ENCODE measurements at regions of chr12 and their contacts with region 1.

Region 1: GRCh38 chr12:122225683-122226407 is at the start of gene DIABLO:
- DNase-seq: peak; percentile 99 to 100 (median 100)
- ATAC-seq: peak; percentile 94
- H3K4me3 ChIP-seq: peak within 1 kb of the TSS; percentile 94
- H3K4me3 Mint-ChIP-seq: peak within 1 kb of the TSS; percentile 95
- H3K27ac ChIP-seq: peak within 1 kb of the TSS; percentile 95 to 97
- H3K27ac Mint-ChIP-seq: peak within 1 kb of the TSS; percentile 95
- H3K4me1 ChIP-seq: peaks cover 37% of the 10 kb centered on the region
- H3K4me1 Mint-ChIP-seq: peaks cover 37% of the 10 kb centered on the region
- H3K27me3 ChIP-seq: no peaks in the 10 kb centered on the region
- H3K27me3 Mint-ChIP-seq: no peaks in the 10 kb centered on the region
- CTCF ChIP-seq: no peak
- total RNA-seq, gene DIABLO: 90.3 to 91.3 TPM

Region 2: GRCh38 chr12:122203301-122204166 is 22.3 kb before region 1 on chr12 and contains the start of gene B3GNT4:
- CTCF ChIA-PET with region 1: no interaction called
- POLR2A ChIA-PET with region 1: interaction called, 15 read pairs
- intact Hi-C with region 1: loop called in 1 of 2 experiments (anchors 2 kb)
- DNase-seq: peak; percentile 50 to 85 (median 70)
- ATAC-seq: peak; percentile 81
- H3K4me3 ChIP-seq: peak within 1 kb of the TSS; percentile 65
- H3K4me3 Mint-ChIP-seq: peak within 1 kb of the TSS; percentile 83
- H3K27ac ChIP-seq: no peak within 1 kb of the TSS
- H3K27ac Mint-ChIP-seq: peak within 1 kb of the TSS; percentile 3
- H3K4me1 ChIP-seq: peaks cover 14% of the 10 kb centered on the region
- H3K4me1 Mint-ChIP-seq: peaks cover 12% of the 10 kb centered on the region
- H3K27me3 ChIP-seq: peaks cover 7 to 12% of the 10 kb centered on the region in 2 experiments
- H3K27me3 Mint-ChIP-seq: no peaks in the 10 kb centered on the region
- CTCF ChIP-seq: no peak
- total RNA-seq, gene B3GNT4: not detected

Region 3: DNA sequence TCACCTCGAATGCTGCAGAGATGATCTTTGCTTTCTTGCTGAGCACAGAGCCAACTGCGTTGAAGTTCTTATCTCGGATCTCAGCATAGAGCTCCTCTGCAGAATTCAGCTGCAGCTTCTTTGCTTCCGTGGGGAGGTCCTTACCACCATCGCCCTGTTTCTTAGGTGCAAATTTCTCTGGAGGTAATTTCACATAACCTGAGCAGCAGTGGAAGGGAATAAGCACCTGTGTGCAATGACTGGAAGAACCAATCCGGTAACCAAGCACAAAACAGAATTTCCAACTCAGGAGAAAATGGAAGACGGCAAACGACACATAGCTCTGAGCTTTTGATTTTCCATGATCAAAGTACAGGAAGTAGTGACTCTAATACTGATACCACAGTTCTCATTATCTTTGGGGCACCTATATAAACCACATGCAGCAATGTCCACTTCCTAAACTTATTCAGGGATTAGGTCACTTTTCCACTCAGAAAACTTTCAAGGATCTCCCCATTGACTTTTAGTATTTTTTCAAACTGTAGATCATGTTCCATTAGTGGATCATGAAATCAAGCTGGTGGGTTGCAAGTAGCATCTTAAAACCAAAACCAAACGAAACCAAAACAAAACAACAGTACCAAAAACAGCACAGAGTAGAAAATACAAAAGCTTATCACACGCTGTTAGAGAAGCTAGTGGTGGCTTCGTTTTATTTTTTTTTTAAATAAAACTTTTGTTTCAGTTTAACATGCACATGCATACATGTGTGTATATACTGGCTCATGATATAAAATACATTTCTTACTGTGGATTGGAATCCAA is 18.9 kb after region 1 on chr12:
- CTCF ChIA-PET with region 1: no interaction called
- POLR2A ChIA-PET with region 1: interaction called, 123 read pairs
- intact Hi-C with region 1: loop called in 1 of 2 experiments (anchors 2 kb)
- DNase-seq: peak in 6 of 14 experiments; percentile 5 to 79 (median 42)
- ATAC-seq: peak; percentile 81
- H3K4me3 ChIP-seq: peak overlapping the region; percentile 54
- H3K4me3 Mint-ChIP-seq: peak overlapping the region; percentile 87
- H3K27ac ChIP-seq: peak overlapping the region; percentile 44 to 52
- H3K27ac Mint-ChIP-seq: peak overlapping the region; percentile 88
- H3K4me1 ChIP-seq: peaks cover 36% of the 10 kb centered on the region
- H3K4me1 Mint-ChIP-seq: peaks cover 31% of the 10 kb centered on the region
- H3K27me3 ChIP-seq: no peaks in the 10 kb centered on the region
- H3K27me3 Mint-ChIP-seq: no peaks in the 10 kb centered on the region
- CTCF ChIP-seq: no peak

Region 4: DNA sequence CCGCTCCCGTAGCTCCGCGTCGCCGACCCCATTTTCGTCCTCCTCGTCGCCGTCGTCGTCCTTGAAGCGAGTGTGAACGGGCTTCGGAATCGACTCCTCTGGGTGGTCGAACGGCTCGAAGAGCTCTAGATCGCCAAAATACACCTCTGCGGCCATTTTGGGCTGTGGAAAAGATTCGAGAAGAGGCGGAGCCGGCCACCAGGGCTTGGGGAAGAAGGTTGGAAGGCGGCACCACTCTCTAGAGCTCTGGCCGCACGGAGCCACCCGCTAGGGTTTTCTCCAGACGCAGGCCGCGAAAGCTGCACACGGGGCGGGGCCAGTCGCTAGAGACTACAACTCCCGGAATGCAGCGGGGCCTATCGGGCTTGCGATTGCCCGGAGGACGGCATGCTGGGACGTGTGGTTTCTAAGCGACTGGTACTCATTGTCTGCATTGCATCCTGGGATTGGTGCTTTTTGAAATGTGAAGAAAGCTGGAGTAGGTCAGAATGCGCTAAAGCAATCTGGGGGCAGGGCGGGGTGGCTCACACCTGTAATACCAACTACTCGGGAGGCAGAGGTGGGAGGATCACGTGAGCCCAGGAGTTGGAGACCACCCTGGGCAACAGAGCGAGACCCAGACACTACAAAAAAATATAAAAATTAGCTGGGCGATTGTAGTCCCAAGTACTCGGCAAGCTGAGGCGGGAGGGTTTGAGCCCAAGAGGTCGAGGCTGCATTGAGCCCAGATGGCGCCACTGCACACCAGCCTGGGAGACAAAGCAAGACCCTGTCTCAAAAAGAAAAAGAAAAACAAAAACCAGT is 275.0 kb after region 1 on chr12 and contains the start of gene ZCCHC8:
- CTCF ChIA-PET with region 1: no interaction called
- POLR2A ChIA-PET with region 1: interaction called, 12 read pairs
- intact Hi-C with region 1: no loop called
- DNase-seq: peak; percentile 91 to 99 (median 96)
- ATAC-seq: peak; percentile 92
- H3K4me3 ChIP-seq: peak within 1 kb of the TSS; percentile 80
- H3K4me3 Mint-ChIP-seq: peak within 1 kb of the TSS; percentile 96
- H3K27ac ChIP-seq: peak within 1 kb of the TSS; percentile 88 to 89
- H3K27ac Mint-ChIP-seq: peak within 1 kb of the TSS; percentile 97
- H3K4me1 ChIP-seq: peaks cover 43% of the 10 kb centered on the region
- H3K4me1 Mint-ChIP-seq: peaks cover 49% of the 10 kb centered on the region
- H3K27me3 ChIP-seq: no peaks in the 10 kb centered on the region
- H3K27me3 Mint-ChIP-seq: no peaks in the 10 kb centered on the region
- CTCF ChIP-seq: no peak
- total RNA-seq, gene ZCCHC8: 49.4 to 54.8 TPM

Region 5: DNA sequence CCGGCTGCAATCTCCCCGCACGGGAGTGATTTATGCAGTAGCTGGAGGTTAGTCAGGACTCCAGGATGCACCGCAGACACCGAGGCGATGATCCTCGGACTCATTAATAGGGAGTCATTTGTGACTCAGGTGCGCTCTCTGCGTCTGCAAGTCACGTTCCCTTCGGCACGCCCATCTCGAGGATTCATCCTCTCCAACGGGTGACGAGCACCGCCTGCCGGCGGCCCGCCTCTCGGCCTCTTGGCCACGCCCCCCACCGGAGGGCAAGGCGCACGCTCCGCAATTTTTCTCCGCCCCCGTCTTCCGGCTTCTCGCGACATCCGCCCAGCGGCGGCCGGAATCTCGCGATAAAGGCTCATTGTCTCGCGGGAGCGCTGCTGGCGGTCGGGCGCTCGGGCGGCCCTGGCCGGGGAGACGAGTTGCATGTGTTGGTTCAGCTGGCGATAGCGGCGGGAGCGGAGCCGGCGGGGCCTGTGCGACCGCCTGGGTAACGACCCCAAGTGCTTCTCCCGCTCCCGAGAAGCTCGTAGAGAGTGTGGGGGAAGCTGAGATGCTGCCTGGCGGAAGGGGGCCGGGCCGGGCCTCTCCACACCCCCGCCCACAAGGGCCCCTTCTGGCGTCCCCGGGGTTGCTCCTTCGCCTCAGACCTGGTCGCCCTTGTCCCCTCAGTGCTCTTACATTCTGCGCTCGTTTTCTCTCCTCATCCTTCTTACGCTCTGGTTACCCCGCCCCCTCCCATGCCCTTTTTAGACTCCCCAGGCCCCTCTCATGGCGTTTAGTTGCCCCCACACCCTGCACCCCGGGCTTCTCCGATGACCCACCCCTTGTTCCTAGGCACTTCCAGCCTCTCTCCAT is 526.8 kb after region 1 on chr12 and contains the start of gene DENR:
- CTCF ChIA-PET with region 1: no interaction called
- POLR2A ChIA-PET with region 1: no interaction called
- intact Hi-C with region 1: loop called in 1 of 2 experiments (anchors 5 kb)
- DNase-seq: peak; percentile 99 to 100 (median 99)
- ATAC-seq: peak; percentile 92
- H3K4me3 ChIP-seq: peak within 1 kb of the TSS; percentile 89
- H3K4me3 Mint-ChIP-seq: peak within 1 kb of the TSS; percentile 96
- H3K27ac ChIP-seq: peak within 1 kb of the TSS; percentile 86 to 89
- H3K27ac Mint-ChIP-seq: peak within 1 kb of the TSS; percentile 97
- H3K4me1 ChIP-seq: peaks cover 21% of the 10 kb centered on the region
- H3K4me1 Mint-ChIP-seq: peaks cover 57% of the 10 kb centered on the region
- H3K27me3 ChIP-seq: no peaks in the 10 kb centered on the region
- H3K27me3 Mint-ChIP-seq: no peaks in the 10 kb centered on the region
- CTCF ChIP-seq: peak; percentile 76
- total RNA-seq, gene DENR: 29.9 to 31.1 TPM

Region 6: DNA sequence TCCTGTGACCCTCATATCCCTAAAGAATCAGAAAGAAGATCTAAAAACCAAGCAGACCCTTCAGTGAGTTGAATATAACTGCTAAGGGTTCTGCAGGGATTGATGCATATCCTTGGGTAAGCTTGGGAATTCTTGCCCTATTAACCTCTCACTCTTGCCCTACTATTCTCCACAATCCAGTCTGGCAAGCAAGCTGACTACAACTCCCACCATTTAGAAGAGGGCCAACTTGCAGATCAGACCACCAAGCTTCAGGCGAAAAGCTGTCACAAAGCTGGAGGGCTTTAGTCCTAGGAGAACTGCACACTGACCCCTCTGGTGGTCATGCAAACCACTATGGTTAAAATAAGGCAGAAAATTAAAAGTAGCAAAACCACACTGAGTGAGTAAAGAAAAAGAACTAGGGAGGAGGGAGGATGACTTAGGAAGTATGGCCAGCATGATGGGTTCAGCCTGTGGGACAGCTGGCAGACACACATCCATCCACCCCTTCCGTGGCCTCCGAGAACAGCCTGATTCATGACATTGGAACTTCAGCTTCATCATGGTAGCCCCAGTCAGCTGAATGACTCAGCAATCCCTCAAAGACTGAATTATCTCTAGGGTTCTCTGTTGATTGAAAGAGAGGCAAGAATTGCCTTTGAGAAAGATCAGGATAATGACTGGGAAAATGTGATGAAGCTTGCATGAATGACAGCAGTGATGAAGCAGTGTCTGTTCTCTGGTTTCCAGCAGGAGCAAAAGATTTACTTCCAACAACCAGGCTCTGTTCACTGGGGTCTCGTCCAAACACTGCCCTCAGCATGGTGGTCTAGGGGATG is 900.6 kb after region 1 on chr12:
- CTCF ChIA-PET with region 1: no interaction called
- POLR2A ChIA-PET with region 1: no interaction called
- intact Hi-C with region 1: no loop called
- DNase-seq: no peak
- ATAC-seq: no peak
- H3K4me3 ChIP-seq: no peak overlapping the region
- H3K4me3 Mint-ChIP-seq: no peak overlapping the region
- H3K27ac ChIP-seq: no peak overlapping the region
- H3K27ac Mint-ChIP-seq: no peak overlapping the region
- H3K4me1 ChIP-seq: peaks cover 33% of the 10 kb centered on the region
- H3K4me1 Mint-ChIP-seq: peaks cover 39% of the 10 kb centered on the region
- H3K27me3 ChIP-seq: no peaks in the 10 kb centered on the region
- H3K27me3 Mint-ChIP-seq: no peaks in the 10 kb centered on the region
- CTCF ChIP-seq: no peak